ENCODE measurements at regions of chr14 and their contacts with region 1.

Region 1: GRCh38 chr14:54488646-54489317 is at the start of gene GMFB:
- DNase-seq: peak; percentile 60 to 84
- H3K4me3 ChIP-seq: peak within 1 kb of the TSS; percentile 81 to 90 (median 86)
- H3K27ac ChIP-seq: peak within 1 kb of the TSS; percentile 80
- H3K4me1 ChIP-seq: peaks cover 0 to 4% (median 0%) of the 10 kb centered on the region in 4 experiments; a peak in 2 of 7 replicates
- H3K27me3 ChIP-seq: no peaks in the 10 kb centered on the region
- CTCF ChIP-seq: peak in 2 of 3 experiments; percentile 18 to 30; a peak in 2 of 4 replicates
- EP300 ChIP-seq: 0 out of 3 replicates have a peak, but pooled peaks of 1 of the 2 experiments have one; percentile 59
- POLR2A ChIP-seq: peak; percentile 76 to 89
- RAD21 ChIP-seq: no peak; a peak in 1 of 4 replicates
- total RNA-seq, gene GMFB: 75.9 and 77.3 TPM in 2 replicates

Region 2: DNA sequence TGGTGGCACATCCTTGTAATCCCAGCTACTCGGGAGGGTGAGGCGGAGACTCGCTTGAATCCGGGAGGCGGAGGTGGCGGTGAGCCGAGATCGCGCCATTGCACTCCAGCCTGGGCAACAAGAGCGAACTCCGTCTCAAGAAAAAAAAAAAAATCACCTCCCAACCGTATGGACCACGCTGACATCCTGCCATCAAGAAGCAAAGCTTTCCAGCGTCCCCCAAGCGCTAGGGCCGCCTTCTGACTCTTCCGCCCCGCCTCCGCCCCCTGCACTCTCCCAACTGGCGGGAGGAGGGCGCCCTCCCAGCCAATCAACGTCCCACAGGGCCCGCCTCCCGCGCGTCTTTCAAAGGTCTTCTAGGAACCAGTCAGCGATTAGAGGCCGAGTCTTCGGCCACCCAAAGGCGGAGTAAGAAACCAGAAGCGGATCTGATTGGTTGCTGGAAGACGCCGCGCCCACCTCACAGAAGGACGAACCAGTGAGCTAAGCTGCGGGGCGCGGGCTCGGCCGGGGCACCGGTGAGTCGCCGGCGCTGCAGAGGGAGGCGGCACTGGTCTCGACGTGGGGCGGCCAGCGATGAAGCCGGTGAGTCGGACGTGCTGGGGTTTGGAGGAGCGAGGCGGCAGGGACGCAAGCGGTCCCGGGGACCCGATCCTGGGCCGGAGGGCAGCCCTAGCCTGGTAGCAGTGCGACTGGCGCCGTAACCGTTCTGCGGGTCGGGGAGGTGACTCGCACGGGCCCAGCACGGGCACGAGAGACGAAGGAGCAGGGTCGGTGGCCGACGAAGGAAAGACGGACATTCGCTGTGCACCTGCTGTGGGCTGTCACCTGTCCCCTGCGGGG is 92.1 kb before region 1 on chr14 and contains the start of gene CDKN3:
- CTCF ChIA-PET with region 1: interaction called, 3 read pairs
- POLR2A ChIA-PET with region 1: interaction called, 15 read pairs
- DNase-seq: peak; percentile 94 to 97
- H3K4me3 ChIP-seq: peak within 1 kb of the TSS; percentile 64 to 84 (median 79)
- H3K27ac ChIP-seq: peak within 1 kb of the TSS; percentile 41; the same call in 1 of the 2 replicates
- H3K4me1 ChIP-seq: peaks cover 0 to 3% (median 1%) of the 10 kb centered on the region in 4 experiments; a peak in 2 of 7 replicates
- H3K27me3 ChIP-seq: peaks cover 0 to 7% (median 3%) of the 10 kb centered on the region in 4 experiments; a peak in 3 of 7 replicates
- CTCF ChIP-seq: peak; percentile 12 to 31 (median 24); a peak in 3 of 4 replicates
- EP300 ChIP-seq: no peak
- POLR2A ChIP-seq: peak; percentile 85 to 88
- RAD21 ChIP-seq: 0 out of 4 replicates have a peak, but pooled peaks of 1 of the 2 experiments have one; percentile 1
- total RNA-seq, gene CDKN3: 41.5 and 48.3 TPM in 2 replicates

Region 3: GRCh38 chr14:54472315-54472714 is 16.5 kb before region 1 on chr14:
- CTCF ChIA-PET with region 1: interaction called, 15 read pairs
- POLR2A ChIA-PET with region 1: interaction called, 12 read pairs
- DNase-seq: no peak
- H3K4me3 ChIP-seq: no peak overlapping the region; a peak in 1 of 8 replicates
- H3K27ac ChIP-seq: no peak overlapping the region
- H3K4me1 ChIP-seq: no peaks in the 10 kb centered on the region; a peak in 1 of 7 replicates
- H3K27me3 ChIP-seq: no peaks in the 10 kb centered on the region
- CTCF ChIP-seq: no peak
- EP300 ChIP-seq: no peak
- POLR2A ChIP-seq: no peak
- RAD21 ChIP-seq: no peak

Region 4: GRCh38 chr14:54503476-54504257 is 14.9 kb after region 1 on chr14:
- CTCF ChIA-PET with region 1: interaction called, 19 read pairs
- POLR2A ChIA-PET with region 1: interaction called, 8 read pairs
- DNase-seq: no peak
- H3K4me3 ChIP-seq: no peak overlapping the region
- H3K27ac ChIP-seq: no peak overlapping the region
- H3K4me1 ChIP-seq: no peaks in the 10 kb centered on the region
- H3K27me3 ChIP-seq: no peaks in the 10 kb centered on the region
- CTCF ChIP-seq: peak in 1 of 3 experiments; percentile 44; a peak in 2 of 4 replicates
- EP300 ChIP-seq: no peak
- POLR2A ChIP-seq: no peak
- RAD21 ChIP-seq: peak; percentile 28 to 40; a peak in 3 of 4 replicates

Region 5: DNA sequence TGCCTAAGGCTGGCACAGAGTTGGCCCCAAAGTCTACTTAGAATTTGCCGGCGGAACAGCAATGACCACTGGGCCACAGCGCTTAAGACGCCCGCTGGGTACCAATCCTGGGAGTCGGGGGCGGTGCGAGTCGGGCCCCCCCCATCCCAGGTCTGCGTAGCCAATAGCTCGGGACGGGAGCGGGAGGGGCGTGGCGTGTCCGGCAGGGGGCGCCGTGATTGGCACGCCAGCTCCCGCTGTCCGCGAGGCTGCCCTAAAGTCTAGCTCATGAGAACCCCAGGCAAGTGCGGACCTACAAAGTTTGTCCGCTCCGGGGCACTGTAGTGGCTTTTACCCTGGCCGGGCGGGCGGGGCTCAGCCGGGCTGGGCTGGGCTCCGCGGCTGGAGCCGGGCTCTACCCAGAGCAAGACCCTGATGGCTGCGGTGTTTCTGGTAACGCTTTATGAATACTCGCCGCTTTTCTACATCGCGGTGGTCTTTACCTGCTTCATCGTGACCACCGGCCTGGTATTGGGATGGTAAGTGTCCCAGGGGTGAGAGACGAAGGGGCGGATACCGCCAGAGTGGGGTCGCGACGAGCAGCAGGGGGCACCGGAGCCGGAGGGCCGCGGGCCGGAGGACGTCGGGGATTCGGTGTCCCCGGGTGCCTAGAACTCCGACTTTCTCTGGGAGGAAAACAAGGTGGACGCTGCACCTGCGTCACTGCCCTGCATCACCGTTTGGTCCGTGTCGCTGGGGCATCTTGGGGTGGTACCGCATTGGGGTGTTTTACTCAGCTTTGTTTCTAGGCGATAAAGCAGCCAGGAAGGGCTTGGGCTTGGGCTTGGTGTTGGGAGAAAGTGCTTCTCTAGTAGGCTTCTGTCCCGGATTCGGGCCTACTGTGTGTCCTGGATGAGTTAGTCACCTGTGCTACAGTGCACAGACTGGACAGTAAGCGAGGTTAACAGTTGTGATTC is 21.0 kb after region 1 on chr14 and contains the start of gene CGRRF1:
- CTCF ChIA-PET with region 1: interaction called, 19 read pairs
- POLR2A ChIA-PET with region 1: interaction called, 9 read pairs
- DNase-seq: peak; percentile 96 to 99
- H3K4me3 ChIP-seq: peak within 1 kb of the TSS; percentile 91 to 98 (median 92)
- H3K27ac ChIP-seq: peak within 1 kb of the TSS; percentile 84
- H3K4me1 ChIP-seq: peaks cover 0 to 4% (median under 1%) of the 10 kb centered on the region in 4 experiments; a peak in 2 of 7 replicates
- H3K27me3 ChIP-seq: no peaks in the 10 kb centered on the region
- CTCF ChIP-seq: peak; percentile 44 to 52 (median 47)
- EP300 ChIP-seq: peak in 1 of 2 experiments; percentile 65; a peak in 1 of 3 replicates
- POLR2A ChIP-seq: peak; percentile 55 to 85
- RAD21 ChIP-seq: no peak; a peak in 1 of 4 replicates
- total RNA-seq, gene CGRRF1: 17.8 and 20.2 TPM in 2 replicates

Region 6: DNA sequence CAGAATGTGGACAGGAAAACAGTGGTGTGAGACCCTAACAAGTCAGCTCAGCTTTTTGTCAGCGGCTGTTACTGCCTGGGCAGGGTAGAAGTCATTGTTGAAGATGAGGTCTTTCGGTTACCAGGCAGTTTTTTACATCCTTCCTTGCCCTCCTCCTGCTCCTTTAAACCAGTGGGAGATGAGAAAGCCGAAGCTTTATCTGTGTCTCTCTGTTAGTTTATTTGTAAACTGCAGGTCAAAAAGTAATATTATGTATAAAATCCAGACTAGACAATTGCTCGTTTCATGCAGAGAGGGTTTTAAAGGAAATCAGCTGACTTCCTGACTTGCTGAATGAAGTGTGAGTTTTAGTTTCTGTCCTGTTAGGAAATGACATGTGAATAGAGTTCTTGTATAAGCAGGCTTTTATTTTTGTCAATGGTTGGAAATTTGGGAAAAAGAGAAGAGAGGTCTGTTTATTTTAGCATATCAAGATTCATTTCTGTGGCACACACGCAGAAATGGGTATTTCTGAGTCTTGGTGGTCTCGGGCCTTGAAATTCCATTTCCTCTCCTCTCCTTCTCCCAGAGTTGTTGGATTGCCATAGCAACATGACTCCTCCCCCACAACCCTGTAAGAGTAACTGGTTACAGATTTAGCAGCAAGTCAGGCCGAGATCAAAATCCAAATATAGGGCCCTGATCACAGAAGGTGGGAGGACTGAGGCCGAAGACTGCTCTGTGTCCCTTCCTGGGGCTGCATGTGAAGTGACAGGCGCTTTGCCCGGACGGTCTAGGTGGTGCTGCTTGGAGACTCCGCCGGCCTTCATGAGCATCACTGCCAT is 139.0 kb after region 1 on chr14:
- CTCF ChIA-PET with region 1: no interaction called
- POLR2A ChIA-PET with region 1: no interaction called
- DNase-seq: no peak
- H3K4me3 ChIP-seq: no peak overlapping the region
- H3K27ac ChIP-seq: no peak overlapping the region
- H3K4me1 ChIP-seq: peaks cover 0 to 15% (median 7%) of the 10 kb centered on the region in 4 experiments; a peak in 5 of 7 replicates
- H3K27me3 ChIP-seq: no peaks in the 10 kb centered on the region
- CTCF ChIP-seq: no peak
- EP300 ChIP-seq: no peak
- POLR2A ChIP-seq: no peak
- RAD21 ChIP-seq: no peak

Measured in H1 (cell line).